Adrenal gland (tissue), 19 donors: ENCODE measurements at regions of chr6 and their contacts with region 1.

Region 1: GRCh38 chr6:44475779-44476434 is 88.4 kb downstream of the CDC5L start:
- DNase-seq: peak; percentile 70 to 88 (median 82)
- H3K4me3 ChIP-seq: no peak overlapping the region
- H3K27ac ChIP-seq: no peak overlapping the region
- H3K4me1 ChIP-seq: no peaks in the 10 kb centered on the region
- H3K27me3 ChIP-seq: no peaks in the 10 kb centered on the region
- CTCF ChIP-seq: peak; percentile 82 to 97 (median 92)
- POLR2A ChIP-seq: no peak

Region 2: GRCh38 chr6:44327096-44327495 is 148.8 kb before region 1 on chr6:
- intact Hi-C with region 1: no loop called
- DNase-seq: no peak
- H3K4me3 ChIP-seq: no peak overlapping the region
- H3K27ac ChIP-seq: no peak overlapping the region
- H3K4me1 ChIP-seq: no peaks in the 10 kb centered on the region
- H3K27me3 ChIP-seq: peaks cover 7% of the 10 kb centered on the region
- CTCF ChIP-seq: no peak
- POLR2A ChIP-seq: no peak

Region 3: DNA sequence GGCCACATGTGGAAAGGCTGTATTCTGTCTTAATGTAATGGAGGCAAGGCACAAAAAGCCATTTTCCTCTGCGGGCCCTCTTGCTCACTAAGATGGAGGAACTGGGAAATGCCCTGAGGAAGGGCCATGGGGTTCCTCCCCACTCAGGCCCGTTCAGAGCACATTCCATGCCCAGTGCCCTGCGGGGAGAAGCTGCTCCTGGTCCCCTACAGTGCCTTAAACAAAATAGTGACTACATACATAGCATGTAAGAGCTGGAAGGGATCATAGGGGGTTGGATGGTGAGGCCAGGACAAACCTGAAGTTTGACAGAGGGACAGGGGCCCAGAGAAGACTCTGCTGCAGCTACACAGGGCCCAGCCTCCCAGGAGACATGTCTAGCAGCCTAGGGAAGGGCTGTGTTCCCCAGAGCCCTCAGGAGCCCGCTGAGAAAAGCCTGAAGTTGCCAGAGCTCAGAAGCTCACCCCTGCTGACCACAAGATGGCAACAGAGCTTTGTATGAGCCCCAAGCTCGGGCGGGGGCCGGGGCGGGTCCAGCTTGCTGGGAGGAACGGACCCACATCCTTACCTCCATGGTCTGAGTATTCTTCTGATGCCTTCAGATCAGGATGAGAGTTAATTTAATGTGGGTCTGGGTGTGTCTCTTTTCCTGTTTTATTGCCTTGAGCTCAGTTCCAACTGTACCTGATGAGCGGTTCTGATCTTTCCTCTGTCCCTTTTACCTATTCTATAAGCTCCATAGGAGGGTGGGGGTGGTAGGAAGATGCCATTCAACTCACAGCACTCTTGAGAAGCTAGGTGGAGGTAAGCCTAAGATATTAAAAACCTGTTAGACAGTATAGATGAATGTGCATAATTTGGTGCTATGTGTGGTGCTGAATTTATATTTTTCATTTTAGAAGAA is 154.5 kb after region 1 on chr6:
- intact Hi-C with region 1: loop called in 1 of 2 experiments (anchors 10 kb)
- DNase-seq: peak in 4 of 7 donors; percentile 19 to 38 (median 36)
- H3K4me3 ChIP-seq: no peak overlapping the region
- H3K27ac ChIP-seq: no peak overlapping the region
- H3K4me1 ChIP-seq: peaks cover 0 to 2% of the 10 kb centered on the region in 2 donors
- H3K27me3 ChIP-seq: peaks cover 3% of the 10 kb centered on the region
- CTCF ChIP-seq: peak in 4 of 6 experiments; percentile 33 to 49 (median 45)
- POLR2A ChIP-seq: no peak

Region 4: DNA sequence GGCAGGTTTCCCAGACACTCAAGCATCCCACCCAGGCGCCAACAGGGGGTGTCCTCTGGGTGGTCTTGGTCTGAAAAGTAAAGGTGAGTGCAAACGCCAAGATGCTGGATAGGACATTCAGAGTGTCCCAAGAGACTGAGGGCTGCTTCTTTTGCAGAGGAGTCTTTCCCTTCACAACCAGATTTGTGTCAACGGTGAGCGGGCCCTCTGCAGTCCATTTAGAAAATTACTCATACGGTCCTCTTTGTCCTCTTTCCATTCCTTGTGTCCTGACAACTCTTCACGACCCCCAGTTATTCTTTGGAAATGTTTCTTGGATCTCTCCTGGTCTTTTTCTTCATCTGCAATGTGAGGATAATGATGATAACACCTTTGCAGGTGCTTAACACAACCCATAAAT is 169.4 kb after region 1 on chr6:
- intact Hi-C with region 1: loop called in 1 of 2 experiments (anchors 5 kb)
- DNase-seq: peak in 1 of 7 donors; percentile 30
- H3K4me3 ChIP-seq: no peak overlapping the region
- H3K27ac ChIP-seq: no peak overlapping the region
- H3K4me1 ChIP-seq: no peaks in the 10 kb centered on the region
- H3K27me3 ChIP-seq: no peaks in the 10 kb centered on the region
- CTCF ChIP-seq: peak in 5 of 6 experiments; percentile 11 to 28 (median 16)
- POLR2A ChIP-seq: no peak

Region 5: GRCh38 chr6:45714741-45715507 is 1239.0 kb after region 1 on chr6:
- intact Hi-C with region 1: loop called in 1 of 2 experiments (anchors 10 kb)
- DNase-seq: peak; percentile 41 to 79 (median 56)
- H3K4me3 ChIP-seq: no peak overlapping the region
- H3K27ac ChIP-seq: no peak overlapping the region
- H3K4me1 ChIP-seq: no peaks in the 10 kb centered on the region
- H3K27me3 ChIP-seq: no peaks in the 10 kb centered on the region
- CTCF ChIP-seq: peak; percentile 56 to 84 (median 78)
- POLR2A ChIP-seq: no peak